Naive thymus-derived CD4-positive, alpha-beta T cell (primary cell): ENCODE measurements at regions of chr17 and their contacts with region 1.

Region 1: DNA sequence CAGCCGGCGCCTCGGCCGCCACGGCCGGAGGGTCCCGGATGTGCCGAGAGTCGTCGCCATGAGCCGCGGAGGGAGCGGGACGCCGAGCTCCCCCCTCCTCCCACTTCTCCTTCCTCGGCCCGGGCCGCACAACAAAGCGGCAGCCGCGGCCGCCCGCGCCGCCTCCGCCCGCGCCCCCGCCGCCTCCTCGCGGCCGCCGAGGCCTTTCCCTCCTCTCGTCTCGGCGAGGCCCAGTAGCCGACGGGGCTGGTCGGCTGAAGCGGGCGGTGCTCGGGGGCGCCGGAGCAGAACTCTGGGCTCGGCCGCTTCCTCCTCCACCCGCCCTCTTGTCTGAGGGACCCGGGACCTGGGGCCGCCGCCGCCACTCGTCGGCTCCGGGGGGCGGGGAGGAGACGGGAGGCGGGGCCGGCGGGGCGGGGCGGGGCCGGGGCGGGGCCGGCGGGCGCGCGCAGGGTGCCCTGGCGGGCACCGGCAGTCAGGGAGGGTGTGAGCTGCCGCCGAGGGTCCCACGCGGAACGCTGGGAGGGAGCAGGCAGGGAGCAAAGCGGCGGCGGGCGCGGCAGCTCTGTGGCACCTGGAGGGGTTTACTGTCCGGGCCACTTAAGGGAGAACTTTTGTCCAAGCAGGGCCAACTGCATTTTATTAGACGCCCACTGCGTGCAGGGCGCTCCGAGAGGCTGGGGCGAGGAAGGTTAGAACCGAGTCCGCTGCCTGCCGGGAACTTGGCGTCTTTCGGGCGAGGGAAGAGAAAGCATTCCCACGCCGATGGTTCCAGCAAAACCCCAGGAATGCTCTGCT is at the start of gene SMURF2:
- DNase-seq: peak; percentile 72 to 84 (median 80)
- ATAC-seq: peak; percentile 96
- H3K4me3 ChIP-seq: peak within 1 kb of the TSS; percentile 77
- H3K4me3 Mint-ChIP-seq: peak within 1 kb of the TSS; percentile 87 to 99 (median 98)
- H3K27ac ChIP-seq: peak within 1 kb of the TSS; percentile 72
- H3K27ac Mint-ChIP-seq: peak within 1 kb of the TSS; percentile 85 to 96 (median 95)
- H3K4me1 ChIP-seq: peaks cover 12 to 18% of the 10 kb centered on the region in 2 donors
- H3K4me1 Mint-ChIP-seq: peaks cover 28 to 42% (median 34%) of the 10 kb centered on the region in 7 donors
- H3K27me3 ChIP-seq: no peaks in the 10 kb centered on the region
- H3K27me3 Mint-ChIP-seq: no peaks in the 10 kb centered on the region
- total RNA-seq, gene SMURF2: 17.0 to 35.7 (median 32.1) TPM

Region 2: GRCh38 chr17:63842540-63843386 is 819.4 kb before region 1 on chr17 and contains the start of gene SMARCD2:
- CTCF ChIA-PET with region 1: no interaction called
- POLR2A ChIA-PET with region 1: no interaction called
- intact Hi-C with region 1: loop called in 1 of 2 experiments (anchors 5 kb)
- DNase-seq: peak; percentile 94 to 99 (median 98)
- ATAC-seq: peak; percentile 96
- H3K4me3 ChIP-seq: peak within 1 kb of the TSS; percentile 87
- H3K4me3 Mint-ChIP-seq: peak within 1 kb of the TSS; percentile 92 to 98 (median 95)
- H3K27ac ChIP-seq: peak within 1 kb of the TSS; percentile 96
- H3K27ac Mint-ChIP-seq: peak within 1 kb of the TSS; percentile 87 to 95 (median 92)
- H3K4me1 ChIP-seq: peaks cover 34 to 36% of the 10 kb centered on the region in 2 donors
- H3K4me1 Mint-ChIP-seq: peaks cover 27 to 52% (median 44%) of the 10 kb centered on the region in 7 donors
- H3K27me3 ChIP-seq: no peaks in the 10 kb centered on the region
- H3K27me3 Mint-ChIP-seq: no peaks in the 10 kb centered on the region
- total RNA-seq, gene SMARCD2: 102 to 148 (median 109) TPM

Region 3: GRCh38 chr17:64707019-64707591 is 44.9 kb after region 1 on chr17:
- CTCF ChIA-PET with region 1: no interaction called
- POLR2A ChIA-PET with region 1: interaction called, 14 read pairs
- intact Hi-C with region 1: loop called (anchors 2 to 5 kb)
- DNase-seq: no peak
- ATAC-seq: no peak
- H3K4me3 ChIP-seq: no peak overlapping the region
- H3K4me3 Mint-ChIP-seq: peak overlapping the region in 5 of 10 donors; percentile 11 to 30 (median 23)
- H3K27ac ChIP-seq: no peak overlapping the region
- H3K27ac Mint-ChIP-seq: peak overlapping the region in 8 of 9 donors; percentile 0 to 65 (median 31)
- H3K4me1 ChIP-seq: peaks cover 24 to 33% of the 10 kb centered on the region in 2 donors
- H3K4me1 Mint-ChIP-seq: peaks cover 35 to 59% (median 52%) of the 10 kb centered on the region in 7 donors
- H3K27me3 ChIP-seq: no peaks in the 10 kb centered on the region
- H3K27me3 Mint-ChIP-seq: peaks cover 0 to 6% (median 0%) of the 10 kb centered on the region in 5 donors

Region 4: DNA sequence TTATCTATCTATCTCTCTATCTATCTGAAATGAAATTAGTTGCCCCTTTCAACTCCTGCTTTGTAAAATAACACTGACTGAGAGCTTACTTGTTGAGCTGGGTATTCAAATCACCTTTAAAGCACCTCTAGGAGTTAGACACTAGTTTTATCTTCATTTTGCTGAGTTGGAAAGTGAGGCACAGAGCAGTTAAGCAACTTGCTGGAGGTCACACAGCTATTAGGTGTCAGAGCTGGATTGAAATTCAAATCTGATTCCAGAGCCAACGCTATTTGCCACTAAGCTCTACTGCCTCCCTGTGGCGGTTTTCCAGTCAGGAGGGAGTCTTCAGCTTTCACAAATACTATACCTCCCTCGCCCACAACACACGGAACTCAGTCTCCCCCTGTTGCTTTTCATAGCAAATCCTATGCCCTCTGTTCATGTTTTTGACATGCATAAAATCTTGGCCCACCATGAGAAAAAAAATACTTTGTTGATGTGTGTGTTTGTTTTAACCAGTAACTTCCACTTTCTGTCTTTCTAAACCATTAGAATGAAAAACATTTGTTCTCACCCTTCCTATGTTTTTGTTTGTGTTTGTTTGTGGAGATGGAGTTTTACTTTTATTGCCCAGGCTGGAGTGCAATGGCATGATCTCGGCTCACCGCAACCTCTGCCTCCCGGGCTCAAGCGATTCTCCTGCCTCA is 74.8 kb after region 1 on chr17:
- CTCF ChIA-PET with region 1: interaction called, 3 read pairs
- POLR2A ChIA-PET with region 1: interaction called, 4 read pairs
- intact Hi-C with region 1: loop called (anchors 5 kb)
- DNase-seq: peak in 8 of 9 donors; percentile 15 to 59 (median 53)
- ATAC-seq: peak; percentile 78
- H3K4me3 ChIP-seq: no peak overlapping the region
- H3K4me3 Mint-ChIP-seq: peak overlapping the region in 1 of 10 donors; percentile 39
- H3K27ac ChIP-seq: no peak overlapping the region
- H3K27ac Mint-ChIP-seq: peak overlapping the region in 3 of 9 donors; percentile 8 to 59 (median 9)
- H3K4me1 ChIP-seq: peaks cover 0 to 12% of the 10 kb centered on the region in 2 donors
- H3K4me1 Mint-ChIP-seq: peaks cover 6 to 26% (median 18%) of the 10 kb centered on the region in 7 donors
- H3K27me3 ChIP-seq: no peaks in the 10 kb centered on the region
- H3K27me3 Mint-ChIP-seq: no peaks in the 10 kb centered on the region

Region 5: GRCh38 chr17:64781014-64781753 is 119.0 kb after region 1 on chr17:
- CTCF ChIA-PET with region 1: no interaction called
- POLR2A ChIA-PET with region 1: no interaction called
- intact Hi-C with region 1: loop called in 1 of 2 experiments (anchors 5 kb)
- DNase-seq: peak in 8 of 9 donors; percentile 33 to 59 (median 44)
- ATAC-seq: peak; percentile 51
- H3K4me3 ChIP-seq: peak overlapping the region; percentile 61
- H3K4me3 Mint-ChIP-seq: peak overlapping the region; percentile 66 to 82 (median 78)
- H3K27ac ChIP-seq: peak overlapping the region; percentile 25
- H3K27ac Mint-ChIP-seq: peak overlapping the region in 2 of 9 donors; percentile 32 to 79
- H3K4me1 ChIP-seq: peaks cover 15 to 28% of the 10 kb centered on the region in 2 donors
- H3K4me1 Mint-ChIP-seq: peaks cover 11 to 31% (median 23%) of the 10 kb centered on the region in 7 donors
- H3K27me3 ChIP-seq: no peaks in the 10 kb centered on the region
- H3K27me3 Mint-ChIP-seq: peaks cover 0 to 12% (median 0%) of the 10 kb centered on the region in 5 donors